Naive thymus-derived CD4-positive, alpha-beta T cell (primary cell): ENCODE measurements at regions of chr15 and their contacts with region 1.

Region 1: GRCh38 chr15:90336705-90337141 is 15.4 kb upstream of the ZNF774 start:
- DNase-seq: peak in 6 of 9 donors; percentile 9 to 43 (median 42)
- ATAC-seq: peak; percentile 92
- H3K4me3 ChIP-seq: no peak overlapping the region
- H3K4me3 Mint-ChIP-seq: peak overlapping the region in 8 of 10 donors; percentile 6 to 59 (median 49)
- H3K27ac ChIP-seq: no peak overlapping the region
- H3K27ac Mint-ChIP-seq: peak overlapping the region; percentile 0 to 82 (median 56)
- H3K4me1 ChIP-seq: peaks cover 0 to 11% of the 10 kb centered on the region in 2 donors
- H3K4me1 Mint-ChIP-seq: peaks cover 8 to 32% (median 19%) of the 10 kb centered on the region in 7 donors
- H3K27me3 ChIP-seq: no peaks in the 10 kb centered on the region
- H3K27me3 Mint-ChIP-seq: no peaks in the 10 kb centered on the region

Region 2: DNA sequence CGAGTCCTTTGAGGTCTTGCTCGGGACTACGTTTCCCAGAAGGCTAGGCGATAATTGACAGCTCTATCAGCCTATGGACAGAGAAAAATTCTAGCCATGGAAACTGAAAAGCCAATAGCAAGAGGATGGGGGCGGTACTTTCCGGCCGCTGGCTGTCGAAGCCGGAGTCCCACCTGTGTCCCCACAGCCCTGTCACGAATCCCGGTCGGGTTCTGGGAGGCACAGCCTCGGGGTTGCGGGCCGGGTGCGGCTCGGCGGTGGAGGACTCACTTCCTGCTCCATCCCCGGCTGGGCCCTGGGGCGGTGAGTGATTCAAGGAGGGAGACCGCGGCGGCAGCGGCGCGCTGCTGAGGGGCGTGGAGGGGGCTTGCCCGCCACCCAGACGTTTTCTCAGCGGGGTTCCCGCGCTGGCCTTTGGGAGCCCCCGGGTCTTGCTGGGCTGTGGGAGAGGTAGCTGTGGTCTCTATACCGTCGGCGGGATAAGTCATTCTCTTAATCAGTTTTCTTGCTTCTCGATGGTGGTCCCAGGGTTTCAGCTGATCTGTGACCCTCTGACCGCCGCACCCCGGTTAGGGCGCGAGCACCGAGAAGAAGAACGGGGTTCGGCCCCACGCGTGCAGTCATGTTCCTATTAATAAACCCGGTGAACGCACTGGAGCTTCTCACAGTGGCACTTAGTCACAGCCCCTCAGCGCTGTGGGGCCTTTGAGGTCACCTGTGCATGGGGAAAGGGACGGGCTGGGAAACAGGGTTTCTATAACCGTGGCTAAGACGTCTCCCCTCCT is 15.6 kb after region 1 on chr15 and contains the start of gene ZNF774:
- CTCF ChIA-PET with region 1: interaction called, 3 read pairs
- POLR2A ChIA-PET with region 1: interaction called, 5 read pairs
- intact Hi-C with region 1: loop called in 1 of 2 experiments (anchors 2 kb)
- DNase-seq: peak; percentile 74 to 95 (median 93)
- ATAC-seq: peak; percentile 99
- H3K4me3 ChIP-seq: peak within 1 kb of the TSS; percentile 91
- H3K4me3 Mint-ChIP-seq: peak within 1 kb of the TSS; percentile 86 to 92 (median 89)
- H3K27ac ChIP-seq: peak within 1 kb of the TSS; percentile 73
- H3K27ac Mint-ChIP-seq: peak within 1 kb of the TSS in 8 of 9 donors; percentile 8 to 86 (median 66)
- H3K4me1 ChIP-seq: peaks cover 5 to 11% of the 10 kb centered on the region in 2 donors
- H3K4me1 Mint-ChIP-seq: peaks cover 7 to 29% (median 9%) of the 10 kb centered on the region in 7 donors
- H3K27me3 ChIP-seq: no peaks in the 10 kb centered on the region
- H3K27me3 Mint-ChIP-seq: peaks cover 0 to 17% (median 0%) of the 10 kb centered on the region in 5 donors
- total RNA-seq, gene ZNF774: 0.22 to 2.0 (median 1.5) TPM